Endothelial cell of umbilical vein (primary cell): ENCODE measurements at regions of chr2 and their contacts with region 1.

Region 1: DNA sequence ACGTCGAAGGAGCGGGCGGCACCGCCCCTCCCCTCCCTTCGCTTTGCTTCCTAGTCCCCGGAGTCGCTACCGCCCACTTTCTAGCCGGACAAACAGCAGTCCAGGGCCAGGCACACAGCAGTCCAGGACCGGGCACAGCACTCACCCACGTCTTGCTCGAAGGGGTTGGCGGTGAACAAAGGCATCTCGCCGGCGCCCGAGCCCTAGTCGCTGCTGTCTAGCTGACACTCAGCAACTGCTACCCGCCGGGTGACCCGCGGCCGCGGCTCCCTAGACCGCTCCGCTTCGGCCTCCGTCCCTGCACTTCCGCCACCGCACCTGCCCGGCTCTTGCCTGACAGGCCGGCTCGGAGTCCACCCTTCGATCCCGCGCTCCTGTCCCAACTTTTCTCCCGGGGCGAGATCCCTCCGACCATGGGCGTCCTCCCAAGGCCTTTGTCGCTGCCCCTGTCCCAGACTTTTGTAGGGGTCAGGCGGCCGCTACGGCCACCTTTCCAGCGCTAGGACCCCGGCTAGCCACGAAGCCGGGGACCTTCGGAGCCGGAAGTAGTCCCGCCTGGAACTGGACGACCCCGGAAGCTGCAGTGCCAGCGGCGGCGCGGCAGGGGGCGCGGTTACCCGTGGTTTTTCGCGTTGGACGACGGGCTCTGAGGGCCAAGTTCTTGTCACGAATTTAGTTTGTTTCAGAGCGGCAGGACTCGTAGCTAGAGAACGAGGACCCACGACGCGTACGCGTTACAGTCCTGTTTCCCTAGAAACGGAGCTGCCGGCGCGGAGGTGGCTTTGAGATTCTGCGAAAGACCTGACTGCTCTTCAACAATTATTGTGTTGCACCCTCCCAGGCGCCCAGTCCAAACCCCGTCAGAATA is at the start of gene STAM2:
- DNase-seq: peak; percentile 95
- H3K4me3 ChIP-seq: peak within 1 kb of the TSS; percentile 88 to 95 (median 93)
- H3K27ac ChIP-seq: peak within 1 kb of the TSS; percentile 95
- H3K4me1 ChIP-seq: peaks cover 12% of the 10 kb centered on the region
- H3K27me3 ChIP-seq: peaks cover 0 to 3% of the 10 kb centered on the region in 2 experiments
- CTCF ChIP-seq: peak; percentile 97 to 99
- POLR2A ChIP-seq: peak; percentile 93
- total RNA-seq, gene STAM2: 25.7 and 27.5 TPM in 2 replicates

Region 2: DNA sequence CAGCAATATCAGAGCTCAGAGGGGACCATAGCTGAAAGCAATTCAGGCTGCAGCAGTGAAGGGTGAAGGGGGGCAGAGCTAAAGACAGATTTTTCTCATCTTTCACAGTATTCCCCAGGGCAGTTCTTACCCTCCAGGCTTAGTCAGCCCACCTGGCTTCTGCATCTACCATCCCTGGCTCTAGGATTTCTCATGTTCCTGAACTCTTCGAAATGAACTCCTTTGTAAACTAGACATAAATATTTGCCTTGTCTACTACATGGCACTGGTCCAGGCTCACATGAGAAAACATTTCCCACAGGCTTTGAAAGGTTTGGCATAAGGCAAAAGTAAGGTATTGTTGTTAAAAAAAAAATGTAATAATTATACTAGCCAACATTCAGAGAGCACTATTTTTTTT is 417.8 kb before region 1 on chr2:
- CTCF ChIA-PET with region 1: no interaction called
- POLR2A ChIA-PET with region 1: no interaction called
- dilution Hi-C with region 1: no loop called
- intact Hi-C with region 1: no loop called
- DNase-seq: peak; percentile 65
- H3K4me3 ChIP-seq: no peak overlapping the region
- H3K27ac ChIP-seq: no peak overlapping the region
- H3K4me1 ChIP-seq: no peaks in the 10 kb centered on the region
- H3K27me3 ChIP-seq: no peaks in the 10 kb centered on the region
- CTCF ChIP-seq: no peak
- POLR2A ChIP-seq: no peak

Region 3: GRCh38 chr2:152062125-152063091 is 113.3 kb before region 1 on chr2:
- CTCF ChIA-PET with region 1: no interaction called
- POLR2A ChIA-PET with region 1: no interaction called
- dilution Hi-C with region 1: no loop called
- intact Hi-C with region 1: no loop called
- DNase-seq: no peak
- H3K4me3 ChIP-seq: no peak overlapping the region
- H3K27ac ChIP-seq: no peak overlapping the region
- H3K4me1 ChIP-seq: no peaks in the 10 kb centered on the region
- H3K27me3 ChIP-seq: peaks cover 0 to 8% of the 10 kb centered on the region in 2 experiments
- CTCF ChIP-seq: no peak
- POLR2A ChIP-seq: no peak

Region 4: GRCh38 chr2:152189622-152190495 is 14.2 kb after region 1 on chr2:
- CTCF ChIA-PET with region 1: interaction called, 24 read pairs
- POLR2A ChIA-PET with region 1: interaction called, 3 read pairs
- dilution Hi-C with region 1: no loop called
- intact Hi-C with region 1: no loop called
- DNase-seq: peak; percentile 71
- H3K4me3 ChIP-seq: no peak overlapping the region
- H3K27ac ChIP-seq: no peak overlapping the region
- H3K4me1 ChIP-seq: no peaks in the 10 kb centered on the region
- H3K27me3 ChIP-seq: no peaks in the 10 kb centered on the region
- CTCF ChIP-seq: peak; percentile 58 to 64
- POLR2A ChIP-seq: no peak

Region 5: DNA sequence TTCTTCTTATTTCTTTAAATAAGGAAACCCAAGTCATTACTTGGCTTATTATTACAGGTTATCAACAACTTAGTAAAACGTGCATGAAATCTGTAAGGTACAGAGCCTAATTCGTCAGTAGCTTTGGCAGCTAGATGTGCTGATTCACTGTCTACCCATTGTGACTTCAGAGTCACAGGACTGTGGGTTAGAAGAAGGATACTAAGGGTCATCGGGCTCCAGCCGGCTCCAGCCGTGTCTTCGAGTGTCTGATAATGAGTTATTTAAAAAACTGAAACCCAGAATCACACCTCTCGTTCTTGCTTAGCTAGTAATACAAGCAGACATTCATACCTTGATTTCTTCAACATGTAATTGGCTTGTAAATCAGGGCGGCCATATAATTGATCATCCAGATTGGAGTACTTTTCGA is 329.8 kb after region 1 on chr2:
- CTCF ChIA-PET with region 1: no interaction called
- POLR2A ChIA-PET with region 1: no interaction called
- dilution Hi-C with region 1: no loop called
- intact Hi-C with region 1: loop called (anchors 5 kb)
- DNase-seq: peak; percentile 82
- H3K4me3 ChIP-seq: no peak overlapping the region
- H3K27ac ChIP-seq: peak overlapping the region; percentile 41
- H3K4me1 ChIP-seq: peaks cover 36% of the 10 kb centered on the region
- H3K27me3 ChIP-seq: no peaks in the 10 kb centered on the region
- CTCF ChIP-seq: no peak
- POLR2A ChIP-seq: no peak

Region 6: DNA sequence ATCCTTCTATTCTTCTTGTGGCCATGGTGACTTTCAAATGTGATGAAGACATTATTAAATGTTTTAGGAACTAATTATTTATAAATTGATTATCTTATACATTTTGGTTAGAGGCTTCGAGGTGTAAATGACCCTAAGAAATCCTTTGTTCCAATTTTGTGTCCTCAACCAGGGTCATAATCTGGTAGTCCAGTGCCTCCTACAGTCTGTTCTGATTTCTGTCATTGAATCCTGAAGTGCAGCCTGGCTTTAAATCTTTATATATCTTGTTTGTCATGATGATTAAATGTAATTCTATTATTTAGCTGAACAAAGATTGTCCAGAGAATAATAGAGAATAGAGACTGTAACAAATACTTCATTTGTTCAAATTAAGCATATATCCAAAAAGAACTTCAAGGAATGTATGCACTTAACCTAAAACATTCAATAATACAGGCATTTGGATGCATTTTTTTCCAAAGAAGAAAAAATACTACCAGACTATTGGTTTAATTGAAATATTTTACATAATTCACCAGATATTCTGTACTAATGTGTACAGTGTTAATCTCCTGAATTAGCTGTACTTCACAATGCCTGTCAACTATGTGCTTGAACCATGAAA is 451.8 kb after region 1 on chr2:
- CTCF ChIA-PET with region 1: interaction called, 7 read pairs
- POLR2A ChIA-PET with region 1: no interaction called
- dilution Hi-C with region 1: no loop called
- intact Hi-C with region 1: loop called (anchors 1 kb)
- DNase-seq: peak; percentile 64
- H3K4me3 ChIP-seq: no peak overlapping the region
- H3K27ac ChIP-seq: no peak overlapping the region
- H3K4me1 ChIP-seq: no peaks in the 10 kb centered on the region
- H3K27me3 ChIP-seq: no peaks in the 10 kb centered on the region
- CTCF ChIP-seq: peak; percentile 43 to 46
- POLR2A ChIP-seq: no peak

Region 7: DNA sequence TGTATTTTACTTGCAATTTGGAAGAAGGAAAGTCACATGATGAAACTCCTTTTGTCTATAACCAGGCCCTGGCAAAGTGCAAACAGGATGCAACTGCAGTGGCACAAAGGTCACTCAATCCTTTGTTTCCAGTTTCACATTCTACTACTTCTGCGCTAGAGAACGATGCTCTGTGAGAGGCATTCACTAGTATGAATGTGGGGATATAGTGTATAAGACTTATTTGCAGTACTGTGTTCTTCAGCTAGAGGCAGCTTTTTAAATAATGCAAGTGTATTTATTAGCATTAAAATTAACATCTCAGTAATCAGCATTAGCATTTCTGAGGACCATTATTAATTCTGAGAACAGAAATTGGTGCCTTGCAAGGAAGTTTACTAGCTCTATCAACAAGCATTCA is 472.6 kb after region 1 on chr2:
- CTCF ChIA-PET with region 1: interaction called, 11 read pairs
- POLR2A ChIA-PET with region 1: no interaction called
- dilution Hi-C with region 1: no loop called
- intact Hi-C with region 1: no loop called
- DNase-seq: peak; percentile 57
- H3K4me3 ChIP-seq: no peak overlapping the region
- H3K27ac ChIP-seq: no peak overlapping the region
- H3K4me1 ChIP-seq: peaks cover 5% of the 10 kb centered on the region
- H3K27me3 ChIP-seq: no peaks in the 10 kb centered on the region
- CTCF ChIP-seq: peak in 1 of 2 donors; percentile 16
- POLR2A ChIP-seq: no peak

Region 8: GRCh38 chr2:152740743-152741328 is 565.1 kb after region 1 on chr2:
- CTCF ChIA-PET with region 1: no interaction called
- POLR2A ChIA-PET with region 1: no interaction called
- dilution Hi-C with region 1: no loop called
- intact Hi-C with region 1: loop called (anchors 2 kb)
- DNase-seq: peak; percentile 78
- H3K4me3 ChIP-seq: no peak overlapping the region
- H3K27ac ChIP-seq: no peak overlapping the region
- H3K4me1 ChIP-seq: peaks cover 5% of the 10 kb centered on the region
- H3K27me3 ChIP-seq: no peaks in the 10 kb centered on the region
- CTCF ChIP-seq: peak; percentile 52
- POLR2A ChIP-seq: no peak